ENCODE measurements at regions of chr6 and their contacts with region 1.

Region 1: GRCh38 chr6:36985808-36986703 is at the start of gene MTCH1:
- DNase-seq: peak; percentile 74 to 95 (median 87)
- ATAC-seq: peak; percentile 82
- H3K4me3 ChIP-seq: peak within 1 kb of the TSS; percentile 97
- H3K4me3 Mint-ChIP-seq: no peak within 1 kb of the TSS
- H3K27ac ChIP-seq: peak within 1 kb of the TSS; percentile 83 to 85
- H3K27ac Mint-ChIP-seq: peak within 1 kb of the TSS; percentile 98
- H3K4me1 ChIP-seq: peaks cover 41% of the 10 kb centered on the region
- H3K4me1 Mint-ChIP-seq: peaks cover 20% of the 10 kb centered on the region
- H3K27me3 ChIP-seq: no peaks in the 10 kb centered on the region
- H3K27me3 Mint-ChIP-seq: no peaks in the 10 kb centered on the region
- CTCF ChIP-seq: no peak
- total RNA-seq, gene MTCH1: 267 to 269 TPM

Region 2: DNA sequence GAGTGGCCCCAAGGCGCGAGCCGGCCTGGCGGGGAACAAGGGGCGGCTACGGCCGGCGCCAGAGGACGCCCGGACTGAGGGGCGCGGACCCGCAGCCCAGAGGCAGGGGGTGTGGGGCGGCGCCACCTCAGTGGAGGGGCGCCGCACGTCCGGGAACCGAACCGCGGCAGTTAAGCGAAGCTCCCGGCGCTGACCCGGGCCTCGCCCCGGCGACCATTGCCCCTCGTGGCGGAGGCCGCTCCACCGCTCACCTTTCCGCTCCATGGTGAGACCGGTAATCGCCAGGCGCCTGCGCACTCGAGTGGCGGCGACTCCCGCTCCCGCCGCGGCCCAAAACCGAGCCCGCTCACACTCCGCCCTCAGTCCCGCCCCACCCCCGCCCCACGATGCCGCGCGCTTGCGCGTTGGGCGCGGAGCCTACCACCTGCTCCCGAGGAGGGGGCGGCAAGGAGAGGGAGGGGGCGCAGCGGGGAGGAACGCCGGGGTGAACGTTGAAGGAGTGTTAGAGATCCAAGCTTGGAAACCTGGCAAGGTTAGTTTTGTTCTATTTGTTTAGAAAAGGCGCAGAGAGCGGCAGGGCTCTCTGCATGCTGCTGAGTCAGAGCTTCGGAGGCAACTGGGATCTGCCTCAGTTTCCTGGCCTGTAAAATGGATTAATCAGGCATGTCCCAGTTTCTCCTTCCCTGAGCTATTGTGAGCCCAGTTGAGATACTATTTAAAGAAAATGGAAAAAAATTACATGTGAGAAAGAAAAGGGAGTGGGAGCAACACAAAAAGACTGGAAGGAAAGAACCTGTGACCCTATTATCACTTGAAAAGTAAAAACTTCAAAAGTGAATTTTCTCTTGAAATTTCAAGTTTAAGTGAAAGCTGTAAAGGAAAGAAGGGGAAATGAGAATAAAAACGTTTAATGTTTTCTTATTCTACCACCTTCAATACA is 1065.0 kb before region 1 on chr6 and contains the start of gene SRPK1:
- CTCF ChIA-PET with region 1: no interaction called
- POLR2A ChIA-PET with region 1: no interaction called
- intact Hi-C with region 1: loop called (anchors 5 to 10 kb)
- DNase-seq: peak; percentile 66 to 90 (median 81)
- ATAC-seq: peak; percentile 76
- H3K4me3 ChIP-seq: peak within 1 kb of the TSS; percentile 63 to 67
- H3K4me3 Mint-ChIP-seq: peak within 1 kb of the TSS; percentile 96
- H3K27ac ChIP-seq: peak within 1 kb of the TSS; percentile 42 to 62
- H3K27ac Mint-ChIP-seq: peak within 1 kb of the TSS; percentile 93
- H3K4me1 ChIP-seq: peaks cover 19% of the 10 kb centered on the region
- H3K4me1 Mint-ChIP-seq: peaks cover 41% of the 10 kb centered on the region
- H3K27me3 ChIP-seq: no peaks in the 10 kb centered on the region
- H3K27me3 Mint-ChIP-seq: no peaks in the 10 kb centered on the region
- CTCF ChIP-seq: no peak
- total RNA-seq, gene SRPK1: 21.0 to 22.7 TPM

Region 3: GRCh38 chr6:36615018-36615761 is 370.9 kb before region 1 on chr6:
- CTCF ChIA-PET with region 1: no interaction called
- POLR2A ChIA-PET with region 1: no interaction called
- intact Hi-C with region 1: loop called in 1 of 2 experiments (anchors 10 kb)
- DNase-seq: peak in 5 of 9 experiments; percentile 31 to 80 (median 54)
- ATAC-seq: peak; percentile 84
- H3K4me3 ChIP-seq: no peak overlapping the region
- H3K4me3 Mint-ChIP-seq: no peak overlapping the region
- H3K27ac ChIP-seq: no peak overlapping the region
- H3K27ac Mint-ChIP-seq: peak overlapping the region; percentile 79
- H3K4me1 ChIP-seq: no peaks in the 10 kb centered on the region
- H3K4me1 Mint-ChIP-seq: peaks cover 15% of the 10 kb centered on the region
- H3K27me3 ChIP-seq: no peaks in the 10 kb centered on the region
- H3K27me3 Mint-ChIP-seq: no peaks in the 10 kb centered on the region
- CTCF ChIP-seq: peak; percentile 60

Region 4: DNA sequence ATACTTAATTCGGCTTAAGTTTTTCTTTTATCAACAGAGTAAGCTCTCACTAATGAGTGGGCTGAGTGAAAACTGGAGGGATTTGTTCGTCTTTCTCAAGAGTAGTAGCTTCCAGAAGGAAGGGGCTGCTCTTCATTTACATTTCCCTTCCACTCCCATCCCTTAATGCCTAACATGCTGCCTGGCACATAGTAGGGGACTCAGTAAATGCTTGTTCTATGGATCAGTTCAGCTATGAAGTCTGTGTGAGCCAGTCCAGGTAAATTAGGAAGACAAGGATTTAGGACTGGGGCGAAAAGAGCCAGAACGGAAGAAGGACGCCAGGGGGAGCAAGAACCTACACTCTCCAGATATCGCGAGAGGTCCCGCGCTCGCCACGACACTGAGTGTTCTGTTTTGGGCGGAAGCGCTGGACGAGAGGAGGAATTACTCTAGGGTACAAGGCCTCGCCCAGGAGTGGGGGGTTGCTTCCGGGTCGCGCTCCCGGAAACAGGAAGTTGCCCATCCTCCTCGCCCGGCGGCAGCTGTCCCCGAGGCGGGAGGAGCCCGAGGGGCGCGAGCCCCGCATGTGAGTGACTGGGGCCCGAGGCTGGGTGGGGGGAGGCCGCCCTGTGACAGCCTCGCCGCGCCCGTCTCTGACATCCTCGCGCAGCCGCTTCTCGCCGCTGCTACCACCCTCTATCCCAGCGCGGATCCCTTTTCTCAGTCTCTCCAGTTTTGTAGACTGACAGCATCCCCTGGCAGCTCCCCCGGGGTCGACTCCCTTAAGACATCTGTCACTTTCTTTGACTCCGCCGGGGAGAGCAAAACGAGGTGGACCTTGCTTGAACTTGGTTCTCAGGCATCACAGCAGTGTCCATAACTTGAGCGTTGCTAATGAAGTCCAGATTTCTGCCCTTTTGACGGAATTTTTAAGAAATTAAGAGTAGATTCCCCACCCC is 100.3 kb before region 1 on chr6 and contains the start of gene C6orf89:
- CTCF ChIA-PET with region 1: interaction called, 5 read pairs
- POLR2A ChIA-PET with region 1: interaction called, 12 read pairs
- intact Hi-C with region 1: loop called (anchors 1 kb)
- DNase-seq: peak; percentile 91 to 99 (median 97)
- ATAC-seq: peak; percentile 98
- H3K4me3 ChIP-seq: peak within 1 kb of the TSS; percentile 75 to 78
- H3K4me3 Mint-ChIP-seq: peak within 1 kb of the TSS; percentile 91
- H3K27ac ChIP-seq: peak within 1 kb of the TSS; percentile 63 to 91
- H3K27ac Mint-ChIP-seq: peak within 1 kb of the TSS; percentile 94
- H3K4me1 ChIP-seq: peaks cover 14% of the 10 kb centered on the region
- H3K4me1 Mint-ChIP-seq: peaks cover 38% of the 10 kb centered on the region
- H3K27me3 ChIP-seq: no peaks in the 10 kb centered on the region
- H3K27me3 Mint-ChIP-seq: no peaks in the 10 kb centered on the region
- CTCF ChIP-seq: peak; percentile 81
- total RNA-seq, gene C6orf89: 22.2 TPM

Region 5: DNA sequence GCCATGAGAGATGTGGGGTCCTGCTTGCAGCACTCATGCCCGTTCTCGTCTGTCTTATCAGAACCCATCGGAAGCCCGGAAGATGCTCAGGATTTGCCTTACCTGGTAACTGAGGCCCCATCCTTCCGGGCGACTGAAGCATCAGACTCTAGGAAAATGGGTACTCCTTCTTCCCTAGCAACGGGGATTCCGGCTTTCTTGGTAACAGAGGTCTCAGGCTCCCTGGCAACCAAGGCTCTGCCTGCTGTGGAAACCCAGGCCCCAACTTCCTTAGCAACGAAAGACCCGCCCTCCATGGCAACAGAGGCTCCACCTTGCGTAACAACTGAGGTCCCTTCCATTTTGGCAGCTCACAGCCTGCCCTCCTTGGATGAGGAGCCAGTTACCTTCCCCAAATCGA is 23.2 kb before region 1 on chr6:
- CTCF ChIA-PET with region 1: no interaction called
- POLR2A ChIA-PET with region 1: no interaction called
- intact Hi-C with region 1: loop called in 1 of 2 experiments (anchors 2 kb)
- DNase-seq: peak; percentile 48 to 80 (median 69)
- ATAC-seq: peak; percentile 74
- H3K4me3 ChIP-seq: peak overlapping the region in 1 of 2 experiments; percentile 5
- H3K4me3 Mint-ChIP-seq: peak overlapping the region; percentile 61
- H3K27ac ChIP-seq: peak overlapping the region; percentile 16 to 19
- H3K27ac Mint-ChIP-seq: peak overlapping the region; percentile 86
- H3K4me1 ChIP-seq: peaks cover 27% of the 10 kb centered on the region
- H3K4me1 Mint-ChIP-seq: peaks cover 31% of the 10 kb centered on the region
- H3K27me3 ChIP-seq: no peaks in the 10 kb centered on the region
- H3K27me3 Mint-ChIP-seq: no peaks in the 10 kb centered on the region
- CTCF ChIP-seq: no peak

Region 6: GRCh38 chr6:37010402-37010892 is 24.4 kb after region 1 on chr6:
- CTCF ChIA-PET with region 1: no interaction called
- POLR2A ChIA-PET with region 1: no interaction called
- intact Hi-C with region 1: no loop called
- DNase-seq: no peak
- ATAC-seq: no peak
- H3K4me3 ChIP-seq: no peak overlapping the region
- H3K4me3 Mint-ChIP-seq: no peak overlapping the region
- H3K27ac ChIP-seq: no peak overlapping the region
- H3K27ac Mint-ChIP-seq: no peak overlapping the region
- H3K4me1 ChIP-seq: peaks cover 10% of the 10 kb centered on the region
- H3K4me1 Mint-ChIP-seq: peaks cover 15% of the 10 kb centered on the region
- H3K27me3 ChIP-seq: no peaks in the 10 kb centered on the region
- H3K27me3 Mint-ChIP-seq: no peaks in the 10 kb centered on the region
- CTCF ChIP-seq: no peak

Region 7: GRCh38 chr6:37051138-37052026 is 65.3 kb after region 1 on chr6:
- CTCF ChIA-PET with region 1: no interaction called
- POLR2A ChIA-PET with region 1: no interaction called
- intact Hi-C with region 1: loop called in 1 of 2 experiments (anchors 2 kb)
- DNase-seq: peak; percentile 83 to 94 (median 91)
- ATAC-seq: peak; percentile 71
- H3K4me3 ChIP-seq: peak overlapping the region in 1 of 2 experiments; percentile 44
- H3K4me3 Mint-ChIP-seq: peak overlapping the region; percentile 58
- H3K27ac ChIP-seq: peak overlapping the region; percentile 59 to 94
- H3K27ac Mint-ChIP-seq: peak overlapping the region; percentile 96
- H3K4me1 ChIP-seq: peaks cover 59% of the 10 kb centered on the region
- H3K4me1 Mint-ChIP-seq: peaks cover 58% of the 10 kb centered on the region
- H3K27me3 ChIP-seq: no peaks in the 10 kb centered on the region
- H3K27me3 Mint-ChIP-seq: no peaks in the 10 kb centered on the region
- CTCF ChIP-seq: peak; percentile 83

Region 8: GRCh38 chr6:37257634-37258404 is 271.8 kb after region 1 on chr6 and contains the starts of genes TBC1D22B and TMEM217:
- CTCF ChIA-PET with region 1: no interaction called
- POLR2A ChIA-PET with region 1: no interaction called
- intact Hi-C with region 1: loop called in 1 of 2 experiments (anchors 1 kb)
- DNase-seq: peak; percentile 89 to 97 (median 95)
- ATAC-seq: peak; percentile 99
- H3K4me3 ChIP-seq: peak within 1 kb of the TSS; percentile 93 to 100
- H3K4me3 Mint-ChIP-seq: peak within 1 kb of the TSS; percentile 92
- H3K27ac ChIP-seq: peak within 1 kb of the TSS; percentile 74 to 94
- H3K27ac Mint-ChIP-seq: peak within 1 kb of the TSS; percentile 85
- H3K4me1 ChIP-seq: peaks cover 24% of the 10 kb centered on the region
- H3K4me1 Mint-ChIP-seq: peaks cover 40% of the 10 kb centered on the region
- H3K27me3 ChIP-seq: no peaks in the 10 kb centered on the region
- H3K27me3 Mint-ChIP-seq: no peaks in the 10 kb centered on the region
- CTCF ChIP-seq: no peak
- total RNA-seq, gene TBC1D22B: 6.7 to 6.8 TPM
- total RNA-seq, gene TMEM217: 0.27 to 1.2 TPM

Region 9: GRCh38 chr6:37868447-37868825 is 882.4 kb after region 1 on chr6:
- CTCF ChIA-PET with region 1: no interaction called
- POLR2A ChIA-PET with region 1: no interaction called
- intact Hi-C with region 1: no loop called
- DNase-seq: peak in 2 of 9 experiments; percentile 9 to 42
- ATAC-seq: no peak
- H3K4me3 ChIP-seq: no peak overlapping the region
- H3K4me3 Mint-ChIP-seq: no peak overlapping the region
- H3K27ac ChIP-seq: peak overlapping the region in 1 of 2 experiments; percentile 64
- H3K27ac Mint-ChIP-seq: peak overlapping the region; percentile 15
- H3K4me1 ChIP-seq: peaks cover 33% of the 10 kb centered on the region
- H3K4me1 Mint-ChIP-seq: peaks cover 66% of the 10 kb centered on the region
- H3K27me3 ChIP-seq: no peaks in the 10 kb centered on the region
- H3K27me3 Mint-ChIP-seq: no peaks in the 10 kb centered on the region
- CTCF ChIP-seq: no peak